ENCODE measurements at regions of chr9 and their contacts with region 1.

Region 1: GRCh38 chr9:6827439-6827838 is 69.7 kb downstream of the KDM4C start:
- DNase-seq: peak; percentile 61 to 82 (median 77)
- H3K4me3 ChIP-seq: no peak overlapping the region
- H3K27ac ChIP-seq: no peak overlapping the region
- H3K4me1 ChIP-seq: no peaks in the 10 kb centered on the region
- H3K27me3 ChIP-seq: no peaks in the 10 kb centered on the region

Region 2: DNA sequence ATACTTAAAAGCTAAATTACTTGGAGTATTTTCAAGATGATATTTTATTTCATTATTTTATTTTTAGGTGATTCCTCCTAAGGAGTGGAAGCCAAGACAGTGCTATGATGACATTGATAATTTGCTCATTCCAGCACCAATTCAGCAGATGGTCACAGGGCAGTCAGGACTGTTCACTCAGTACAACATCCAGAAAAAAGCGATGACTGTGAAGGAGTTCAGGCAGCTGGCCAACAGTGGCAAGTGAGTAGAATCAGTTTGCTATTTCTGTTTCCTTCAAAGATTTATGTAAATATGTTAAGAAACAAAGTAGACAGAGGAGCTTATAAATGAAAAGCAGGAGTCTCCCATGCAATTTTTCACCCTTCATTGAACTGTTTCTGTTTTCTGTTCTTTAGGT is 21.9 kb before region 1 on chr9:
- CTCF ChIA-PET with region 1: no interaction called
- POLR2A ChIA-PET with region 1: no interaction called
- DNase-seq: peak in 1 of 3 donors; percentile 8
- H3K4me3 ChIP-seq: no peak overlapping the region
- H3K27ac ChIP-seq: no peak overlapping the region
- H3K4me1 ChIP-seq: no peaks in the 10 kb centered on the region
- H3K27me3 ChIP-seq: no peaks in the 10 kb centered on the region

Region 3: DNA sequence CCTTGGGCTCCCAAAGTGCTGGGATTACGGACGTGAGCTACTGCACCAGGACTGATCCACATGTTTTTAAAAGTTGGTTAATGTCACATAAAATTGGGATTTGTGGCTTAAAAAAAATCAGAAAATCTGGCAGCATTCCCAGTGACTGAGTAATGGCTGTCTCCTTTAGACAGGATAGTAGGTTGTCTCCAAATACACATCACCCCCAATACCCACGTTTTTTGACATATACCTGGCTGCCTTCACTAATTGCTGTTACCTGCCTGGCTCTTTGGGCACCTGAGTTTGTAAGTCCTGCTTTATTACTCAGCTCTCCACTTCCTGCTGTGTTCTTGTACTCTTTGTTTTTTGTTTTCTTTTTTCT is 15.1 kb after region 1 on chr9:
- CTCF ChIA-PET with region 1: interaction called, 27 read pairs
- POLR2A ChIA-PET with region 1: no interaction called
- DNase-seq: no peak
- H3K4me3 ChIP-seq: no peak overlapping the region
- H3K27ac ChIP-seq: no peak overlapping the region
- H3K4me1 ChIP-seq: no peaks in the 10 kb centered on the region
- H3K27me3 ChIP-seq: no peaks in the 10 kb centered on the region